A549 (cell line): ENCODE measurements at regions of chr6 and their contacts with region 1.

Region 1: DNA sequence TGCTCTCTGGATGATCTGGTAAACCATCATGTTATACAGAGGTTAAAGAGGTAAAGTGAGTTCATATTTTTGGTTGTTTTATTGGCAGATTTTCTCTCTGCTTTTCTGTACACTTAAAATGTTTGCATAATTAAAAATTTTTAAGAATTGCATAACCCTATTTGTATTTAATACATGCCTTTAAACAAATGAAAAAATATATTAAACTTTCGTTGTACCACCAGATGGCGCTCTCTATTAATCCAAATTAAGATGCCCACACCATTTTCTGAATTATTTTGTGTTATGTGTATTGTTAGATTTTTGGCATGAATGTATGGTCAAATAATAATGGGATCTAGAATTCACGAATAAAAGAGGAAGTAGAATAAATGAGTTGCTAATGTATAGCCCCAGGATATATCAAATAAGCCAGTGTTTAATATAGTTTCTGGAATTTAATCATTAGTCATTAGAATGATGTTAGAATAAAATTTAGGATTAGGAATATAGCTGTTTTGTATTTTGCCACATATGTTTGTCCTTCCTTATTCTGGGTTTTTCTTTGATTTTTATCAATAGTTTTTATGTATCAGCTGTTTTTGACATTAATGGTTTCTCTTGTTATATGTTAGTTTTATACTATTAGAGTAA is 38.9 kb downstream of the SMAP1 start:
- DNase-seq: peak; percentile 7 to 41
- ATAC-seq: no peak
- H3K4me3 ChIP-seq: no peak overlapping the region
- H3K27ac ChIP-seq: no peak overlapping the region
- H3K4me1 ChIP-seq: peaks cover 4% of the 10 kb centered on the region; the same call in 2 of the 3 replicates
- CTCF ChIP-seq: peak; percentile 79
- EP300 ChIP-seq: no peak
- POLR2A ChIP-seq: no peak
- RAD21 ChIP-seq: peak; percentile 52 to 67

Region 2: GRCh38 chr6:70955441-70956190 is 249.0 kb after region 1 on chr6:
- CTCF ChIA-PET with region 1: interaction called, 13 read pairs
- POLR2A ChIA-PET with region 1: no interaction called
- DNase-seq: peak; percentile 33 to 74
- ATAC-seq: peak; percentile 96 to 98
- H3K4me3 ChIP-seq: peak overlapping the region; percentile 58
- H3K27ac ChIP-seq: peak overlapping the region; percentile 48 to 58; a peak in 4 of 6 replicates
- H3K4me1 ChIP-seq: 0 out of 3 replicates have a peak, but pooled peaks cover 3% of the 10 kb centered on the region
- CTCF ChIP-seq: peak; percentile 69
- EP300 ChIP-seq: no peak
- POLR2A ChIP-seq: no peak
- RAD21 ChIP-seq: peak; percentile 62 to 67

Region 3: GRCh38 chr6:70998148-70998547 is 291.5 kb after region 1 on chr6:
- CTCF ChIA-PET with region 1: no interaction called
- POLR2A ChIA-PET with region 1: no interaction called
- DNase-seq: no peak
- ATAC-seq: no peak
- H3K4me3 ChIP-seq: no peak overlapping the region
- H3K27ac ChIP-seq: no peak overlapping the region
- H3K4me1 ChIP-seq: no peaks in the 10 kb centered on the region
- CTCF ChIP-seq: no peak
- EP300 ChIP-seq: no peak
- POLR2A ChIP-seq: no peak
- RAD21 ChIP-seq: no peak